ENCODE measurements at regions of chr18 and their contacts with region 1.

Region 1: DNA sequence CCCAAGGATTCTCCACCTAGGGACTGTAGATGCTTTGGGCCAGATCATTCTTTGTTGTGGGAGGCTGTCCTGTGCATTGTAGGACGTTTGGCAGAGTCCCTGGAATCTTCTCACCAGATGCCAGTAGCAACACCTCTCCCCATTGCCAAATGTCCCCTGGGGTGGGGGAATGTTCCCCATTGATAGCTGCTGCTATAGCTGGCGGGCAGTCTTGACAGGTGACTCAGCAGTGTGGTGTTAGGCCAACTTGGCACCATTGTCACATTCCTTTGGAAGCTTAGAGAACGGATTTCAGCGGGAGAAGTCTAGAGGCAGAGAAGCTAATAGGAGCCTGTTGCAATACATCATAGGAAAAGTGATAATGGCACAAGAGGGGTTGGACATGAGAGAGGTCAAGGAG is 495.7 kb upstream of the SMIM21 start:
- DNase-seq: peak; percentile 92
- H3K4me3 ChIP-seq: no peak overlapping the region
- H3K27ac ChIP-seq: peak overlapping the region; percentile 40 to 73 (median 60)
- H3K4me1 ChIP-seq: peaks cover 0 to 16% (median 11%) of the 10 kb centered on the region in 4 donors
- H3K27me3 ChIP-seq: no peaks in the 10 kb centered on the region
- CTCF ChIP-seq: no peak
- EP300 ChIP-seq: peak in 2 of 4 donors; percentile 30 to 45
- POLR2A ChIP-seq: no peak

Region 2: GRCh38 chr18:74689251-74689650 is 1233.9 kb before region 1 on chr18:
- intact Hi-C with region 1: no loop called
- DNase-seq: no peak
- H3K4me3 ChIP-seq: no peak overlapping the region
- H3K27ac ChIP-seq: no peak overlapping the region
- H3K4me1 ChIP-seq: peaks cover 0 to under 1% (median 0%) of the 10 kb centered on the region in 4 donors
- H3K27me3 ChIP-seq: no peaks in the 10 kb centered on the region
- CTCF ChIP-seq: no peak
- EP300 ChIP-seq: no peak
- POLR2A ChIP-seq: no peak

Region 3: DNA sequence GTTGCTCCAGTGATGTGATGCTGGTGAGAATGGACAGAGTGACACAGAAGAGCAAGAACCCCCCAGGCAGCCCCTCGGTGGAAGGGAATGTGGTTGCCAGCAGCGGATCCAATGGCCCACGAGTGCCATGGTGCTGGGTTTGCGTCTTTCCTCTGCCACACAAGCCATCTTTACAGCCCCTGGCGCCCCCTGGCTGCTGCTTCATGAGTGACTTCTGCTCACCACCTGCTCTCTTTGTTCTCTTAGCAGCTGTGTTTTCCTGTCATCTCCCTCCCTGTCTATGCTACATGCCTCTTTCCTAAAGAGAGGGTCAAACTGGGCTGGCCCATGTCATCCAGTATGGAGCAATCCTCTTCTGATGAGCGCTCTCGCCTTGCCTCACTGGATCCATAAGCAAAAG is 195.7 kb before region 1 on chr18:
- intact Hi-C with region 1: no loop called
- DNase-seq: no peak
- H3K4me3 ChIP-seq: no peak overlapping the region
- H3K27ac ChIP-seq: no peak overlapping the region
- H3K4me1 ChIP-seq: no peaks in the 10 kb centered on the region
- H3K27me3 ChIP-seq: no peaks in the 10 kb centered on the region
- CTCF ChIP-seq: peak in 1 of 4 experiments; percentile 10
- EP300 ChIP-seq: no peak
- POLR2A ChIP-seq: no peak

Region 4: GRCh38 chr18:75810961-75811551 is 112.1 kb before region 1 on chr18:
- intact Hi-C with region 1: no loop called
- DNase-seq: no peak
- H3K4me3 ChIP-seq: no peak overlapping the region
- H3K27ac ChIP-seq: peak overlapping the region in 3 of 4 donors; percentile 59 to 73 (median 61)
- H3K4me1 ChIP-seq: peaks cover 0 to 40% (median 31%) of the 10 kb centered on the region in 4 donors
- H3K27me3 ChIP-seq: no peaks in the 10 kb centered on the region
- CTCF ChIP-seq: no peak
- EP300 ChIP-seq: no peak
- POLR2A ChIP-seq: no peak

Region 5: DNA sequence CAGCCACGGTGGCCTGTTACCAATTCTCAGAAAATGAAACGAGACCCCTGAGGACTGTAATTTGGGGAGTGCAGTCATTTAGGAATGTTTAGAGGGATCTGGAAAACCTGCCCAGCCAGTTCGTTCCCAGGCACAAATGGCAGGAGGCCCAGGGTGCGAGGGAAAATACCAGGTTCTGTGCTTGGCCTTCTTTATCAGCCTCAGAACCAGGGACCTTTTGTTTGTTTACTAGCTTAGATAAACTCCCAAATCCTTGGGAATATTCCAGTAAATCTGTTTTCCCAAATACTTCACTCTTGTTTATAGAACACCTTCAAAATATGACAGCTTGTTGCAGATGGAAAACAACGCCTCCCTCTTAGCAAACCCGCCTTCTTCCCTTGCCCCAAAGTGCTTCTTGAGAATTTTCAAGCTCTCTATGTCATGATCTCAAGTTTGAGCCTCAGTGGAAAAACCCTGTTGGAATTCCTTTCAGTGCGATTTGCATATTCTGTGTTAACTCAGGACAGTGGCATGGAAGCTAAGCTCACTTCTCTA is 95.3 kb before region 1 on chr18:
- intact Hi-C with region 1: loop called (anchors 10 kb)
- DNase-seq: no peak
- H3K4me3 ChIP-seq: no peak overlapping the region
- H3K27ac ChIP-seq: peak overlapping the region in 3 of 4 donors; percentile 59 to 77 (median 74)
- H3K4me1 ChIP-seq: peaks cover 0 to 44% (median 43%) of the 10 kb centered on the region in 4 donors
- H3K27me3 ChIP-seq: no peaks in the 10 kb centered on the region
- CTCF ChIP-seq: no peak
- EP300 ChIP-seq: no peak
- POLR2A ChIP-seq: no peak

Region 6: GRCh38 chr18:75874401-75875089 is 48.6 kb before region 1 on chr18:
- intact Hi-C with region 1: loop called (anchors 2 kb)
- DNase-seq: no peak
- H3K4me3 ChIP-seq: peak overlapping the region in 3 of 4 donors; percentile 18 to 28 (median 25)
- H3K27ac ChIP-seq: peak overlapping the region; percentile 75 to 89 (median 84)
- H3K4me1 ChIP-seq: peaks cover 0 to 59% (median 48%) of the 10 kb centered on the region in 4 donors
- H3K27me3 ChIP-seq: no peaks in the 10 kb centered on the region
- CTCF ChIP-seq: no peak
- EP300 ChIP-seq: no peak
- POLR2A ChIP-seq: no peak

Region 7: GRCh38 chr18:75984853-75985252 is 61.7 kb after region 1 on chr18:
- intact Hi-C with region 1: no loop called
- DNase-seq: no peak
- H3K4me3 ChIP-seq: no peak overlapping the region
- H3K27ac ChIP-seq: no peak overlapping the region
- H3K4me1 ChIP-seq: no peaks in the 10 kb centered on the region
- H3K27me3 ChIP-seq: no peaks in the 10 kb centered on the region
- CTCF ChIP-seq: no peak
- EP300 ChIP-seq: no peak
- POLR2A ChIP-seq: no peak